ENCODE measurements at regions of chr2 and their contacts with region 1.

Region 1: DNA sequence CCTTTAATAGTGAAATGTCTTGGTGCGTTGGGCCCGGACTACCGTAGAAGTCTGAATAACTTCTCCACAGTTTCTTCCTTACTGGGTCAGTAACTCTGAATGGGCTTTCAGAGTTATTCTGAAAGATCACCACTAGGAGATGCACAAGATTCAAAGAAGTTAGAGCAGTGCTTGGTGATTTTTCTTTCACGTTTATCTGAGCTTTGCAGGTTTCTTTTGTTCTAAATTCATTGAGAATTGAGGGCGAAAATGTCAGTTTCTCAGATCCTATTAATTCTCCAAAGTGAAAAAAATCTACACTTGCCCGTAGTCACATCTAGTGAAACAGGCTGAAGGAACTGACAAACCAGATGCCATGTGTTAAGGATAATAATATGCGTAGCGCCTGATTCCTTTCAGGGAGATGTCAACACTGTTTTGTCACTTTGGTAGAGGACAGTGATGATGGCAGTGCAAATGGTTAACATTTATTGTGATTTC is 70.1 kb downstream of the QPCT start:
- H3K4me3 ChIP-seq: no peak overlapping the region
- H3K27ac ChIP-seq: no peak overlapping the region
- H3K4me1 ChIP-seq: no peaks in the 10 kb centered on the region
- CTCF ChIP-seq: peak; percentile 56; the same call in 1 of the 2 replicates

Region 2: DNA sequence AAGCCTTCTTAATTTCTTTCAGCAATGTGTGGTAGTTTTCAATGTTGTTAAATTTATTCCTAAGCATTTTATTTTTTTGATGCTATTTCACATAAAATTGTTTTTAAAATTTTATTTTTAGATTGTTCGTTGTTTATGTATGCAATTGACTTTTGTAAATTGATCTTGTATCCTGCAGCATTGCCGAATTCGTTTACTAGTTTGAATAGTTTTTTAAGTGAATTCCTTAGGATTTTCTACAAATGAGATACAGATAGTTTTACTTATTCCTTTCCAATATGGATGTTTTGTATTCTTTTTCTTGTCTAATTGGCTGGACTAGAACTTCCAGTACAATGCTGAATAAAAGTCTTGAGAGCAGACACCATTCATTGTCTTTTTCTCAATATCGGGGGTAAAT is 14.5 kb before region 1 on chr2:
- CTCF ChIA-PET with region 1: interaction called, 26 read pairs
- POLR2A ChIA-PET with region 1: no interaction called
- H3K4me3 ChIP-seq: no peak overlapping the region
- H3K27ac ChIP-seq: no peak overlapping the region
- H3K4me1 ChIP-seq: no peaks in the 10 kb centered on the region
- CTCF ChIP-seq: no peak

Region 3: DNA sequence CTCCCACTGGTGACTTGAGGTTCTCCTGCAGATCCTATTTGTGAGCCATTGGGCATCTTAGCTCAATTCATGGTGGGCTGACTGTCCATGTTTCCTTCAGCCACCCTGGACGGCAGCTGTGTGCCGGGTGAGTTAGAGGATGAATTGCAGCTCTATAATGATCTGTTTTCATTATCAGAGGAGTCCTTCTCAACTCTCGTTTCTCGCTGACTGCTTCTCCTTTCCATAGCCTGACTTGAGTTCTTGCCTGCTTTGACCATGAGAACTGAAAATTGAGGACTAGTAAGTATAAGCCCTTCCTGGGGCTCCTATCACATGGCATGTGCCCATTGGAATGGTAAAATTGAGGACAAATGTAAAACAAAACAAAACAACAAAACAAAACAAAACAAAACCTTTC is 135.1 kb after region 1 on chr2:
- CTCF ChIA-PET with region 1: interaction called, 10 read pairs
- POLR2A ChIA-PET with region 1: no interaction called
- H3K4me3 ChIP-seq: no peak overlapping the region
- H3K27ac ChIP-seq: no peak overlapping the region
- H3K4me1 ChIP-seq: no peaks in the 10 kb centered on the region
- CTCF ChIP-seq: no peak

Region 4: DNA sequence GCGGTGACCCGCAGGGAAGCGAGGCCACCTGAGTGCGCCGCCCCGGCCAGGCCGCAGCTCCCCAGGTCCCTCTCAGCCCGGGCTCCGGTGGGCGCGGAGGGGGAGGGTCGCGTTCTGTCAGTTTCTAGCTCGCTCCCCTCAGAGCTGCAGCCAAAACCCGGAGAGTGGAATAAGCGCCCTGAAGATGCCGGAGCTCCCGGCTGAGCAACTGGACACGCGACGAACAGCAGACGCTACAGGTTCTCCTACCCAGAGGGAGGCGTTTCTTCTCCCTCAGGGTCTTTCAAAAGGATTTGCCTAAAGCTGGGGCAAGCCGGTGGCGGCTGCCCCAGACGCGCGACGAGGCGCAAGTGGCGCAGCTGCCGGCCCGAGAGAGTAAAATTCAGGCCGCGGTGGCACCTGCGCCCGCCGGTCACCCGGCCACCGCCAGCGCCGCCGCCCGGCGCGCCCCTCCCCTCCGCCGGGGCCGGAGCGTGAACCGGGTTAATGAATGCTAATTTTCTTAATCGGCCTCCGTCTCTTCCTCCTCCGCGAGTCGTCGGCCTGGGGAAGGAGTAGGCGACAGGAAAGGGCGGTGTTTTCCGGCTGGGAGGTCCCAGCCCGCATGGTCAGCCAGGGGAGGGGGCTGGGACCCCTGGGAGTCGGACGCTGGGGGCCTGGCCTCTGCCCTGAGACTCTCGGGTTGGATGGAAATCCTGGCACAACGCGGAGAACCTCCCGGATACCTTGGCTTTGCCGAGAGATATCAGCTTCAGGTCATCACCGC is 257.8 kb after region 1 on chr2:
- CTCF ChIA-PET with region 1: interaction called, 12 read pairs
- POLR2A ChIA-PET with region 1: interaction called, 10 read pairs
- H3K4me3 ChIP-seq: peak overlapping the region; percentile 93
- H3K27ac ChIP-seq: peak overlapping the region; percentile 87
- H3K4me1 ChIP-seq: 0 out of 2 replicates have a peak, but pooled peaks cover 2% of the 10 kb centered on the region
- CTCF ChIP-seq: no peak; the same call in 1 of the 2 replicates

Region 5: DNA sequence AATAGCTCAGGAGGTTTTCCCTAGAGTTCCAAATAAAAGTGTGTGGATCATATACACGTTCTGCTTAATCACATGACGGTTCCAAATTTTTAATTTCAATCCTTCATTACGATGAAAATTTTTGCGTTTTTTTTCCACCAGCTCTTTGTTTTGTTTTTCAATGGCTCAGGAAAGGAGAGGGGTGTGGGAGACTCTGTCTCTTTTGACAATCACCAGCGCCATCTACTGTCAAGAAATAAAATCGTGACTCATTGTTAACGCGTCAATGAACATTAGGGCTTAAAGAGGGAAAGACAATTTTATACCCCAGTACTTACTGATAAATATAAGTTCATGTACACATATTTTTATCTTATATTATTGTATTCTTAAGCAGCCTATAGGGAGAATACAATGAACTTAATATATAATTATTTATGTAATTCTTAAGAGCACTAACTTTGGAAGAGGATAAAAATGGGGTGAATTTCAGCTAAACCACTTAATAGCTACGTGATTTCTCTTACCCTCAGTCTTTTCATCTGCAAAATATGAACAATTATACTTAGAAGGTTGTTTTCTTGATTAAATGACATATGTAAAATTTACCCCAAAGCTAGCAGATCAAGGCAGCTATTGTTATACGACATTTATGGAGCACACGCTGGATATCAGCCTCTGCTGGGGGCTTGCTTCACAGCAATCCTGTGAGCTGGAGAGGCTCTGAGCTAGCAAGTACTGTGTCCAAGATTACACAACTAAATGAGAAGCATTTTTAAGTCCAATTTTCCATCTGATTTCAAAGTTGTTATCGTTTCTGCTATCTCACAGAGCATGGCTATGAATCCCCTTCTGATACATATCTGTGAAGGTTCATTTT is 463.2 kb after region 1 on chr2:
- CTCF ChIA-PET with region 1: interaction called, 122 read pairs
- POLR2A ChIA-PET with region 1: no interaction called
- H3K4me3 ChIP-seq: no peak overlapping the region
- H3K27ac ChIP-seq: no peak overlapping the region
- H3K4me1 ChIP-seq: no peaks in the 10 kb centered on the region
- CTCF ChIP-seq: peak; percentile 49

Measured in HEK293 (cell line).